ENCODE measurements at regions of chr21 and their contacts with region 1.

Region 1: GRCh38 chr21:42187976-42188653 is 30.8 kb upstream of the ABCG1 start:
- DNase-seq: peak; percentile 51 to 91 (median 78)
- ATAC-seq: peak; percentile 92 to 93
- H3K4me3 Mint-ChIP-seq: peak overlapping the region; percentile 63 to 85 (median 77)
- H3K27ac Mint-ChIP-seq: peak overlapping the region; percentile 96 to 99 (median 97)
- H3K4me1 Mint-ChIP-seq: peaks cover 22 to 70% (median 41%) of the 10 kb centered on the region in 4 donors
- H3K27me3 Mint-ChIP-seq: no peaks in the 10 kb centered on the region

Region 2: GRCh38 chr21:42199488-42200458 is 11.7 kb after region 1 on chr21:
- POLR2A ChIA-PET with region 1: interaction called, 16 read pairs
- DNase-seq: peak in 4 of 10 donors; percentile 30 to 60 (median 47)
- ATAC-seq: peak; percentile 67 to 81
- H3K4me3 Mint-ChIP-seq: peak overlapping the region in 9 of 10 donors; percentile 26 to 72 (median 67)
- H3K27ac Mint-ChIP-seq: peak overlapping the region; percentile 45 to 93 (median 88)
- H3K4me1 Mint-ChIP-seq: peaks cover 34 to 70% (median 65%) of the 10 kb centered on the region in 4 donors
- H3K27me3 Mint-ChIP-seq: no peaks in the 10 kb centered on the region

Region 3: DNA sequence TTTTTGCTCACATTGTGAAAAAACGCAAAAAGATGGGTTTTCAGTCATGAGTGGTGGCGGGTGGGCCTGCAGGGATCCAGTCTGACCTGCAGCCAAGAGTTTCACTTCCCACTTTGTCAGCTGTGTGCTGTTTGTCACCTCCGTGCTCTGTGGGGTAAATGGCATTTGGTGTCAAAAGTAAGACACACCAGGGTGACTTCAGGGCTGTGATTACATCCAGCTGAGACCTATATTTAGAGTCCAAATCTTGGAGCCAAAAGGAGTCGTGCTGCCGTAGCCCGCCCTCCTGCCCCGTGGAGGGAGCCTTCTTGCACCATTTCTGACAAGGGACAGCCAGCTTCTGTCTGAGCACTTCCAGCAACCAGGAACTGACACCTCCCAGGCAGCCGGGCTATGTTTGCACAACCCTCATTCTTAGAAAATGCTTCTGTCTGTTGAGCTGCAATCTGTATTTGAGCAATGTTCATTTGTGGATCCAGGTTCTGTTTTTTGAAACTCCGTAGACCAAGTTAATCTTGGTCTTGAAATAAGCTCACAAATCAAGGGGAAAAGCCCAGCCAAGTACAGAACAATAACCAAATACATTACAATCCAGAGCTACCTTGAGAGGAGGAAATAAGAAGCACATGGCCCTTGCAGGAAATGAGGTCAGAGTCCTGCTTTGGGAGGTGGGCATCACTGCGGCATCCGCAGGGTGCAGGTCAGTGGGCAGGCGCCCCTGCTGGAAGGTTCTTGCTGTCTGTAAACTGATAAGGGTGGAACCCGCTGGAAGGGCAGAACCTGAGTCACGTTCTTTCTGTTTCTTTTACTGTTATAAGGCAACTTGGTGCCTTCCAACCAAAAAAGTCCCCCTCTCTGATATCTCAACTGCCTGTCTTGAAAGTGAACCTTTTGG is 45.2 kb after region 1 on chr21:
- POLR2A ChIA-PET with region 1: interaction called, 94 read pairs
- DNase-seq: peak; percentile 60 to 88 (median 83)
- ATAC-seq: peak; percentile 51 to 65
- H3K4me3 Mint-ChIP-seq: peak overlapping the region; percentile 65 to 87 (median 78)
- H3K27ac Mint-ChIP-seq: peak overlapping the region; percentile 78 to 98 (median 93)
- H3K4me1 Mint-ChIP-seq: peaks cover 36 to 97% (median 96%) of the 10 kb centered on the region in 4 donors
- H3K27me3 Mint-ChIP-seq: no peaks in the 10 kb centered on the region